Ascending aorta (tissue), 2 donors: ENCODE measurements at regions of chr15 and their contacts with region 1.

Region 1: GRCh38 chr15:74134387-74135027 is 4.1 kb downstream of the ISLR2 start:
- DNase-seq: no peak
- H3K4me3 ChIP-seq: no peak overlapping the region
- H3K27ac ChIP-seq: no peak overlapping the region
- H3K4me1 ChIP-seq: peaks cover 3 to 25% of the 10 kb centered on the region in 2 donors
- H3K27me3 ChIP-seq: peaks cover 35% of the 10 kb centered on the region
- CTCF ChIP-seq: peak in 2 of 3 experiments; percentile 33 to 40

Region 2: GRCh38 chr15:73704869-73705645 is 429.4 kb before region 1 on chr15:
- intact Hi-C with region 1: no loop called
- DNase-seq: peak in 1 of 2 donors; percentile 72
- H3K4me3 ChIP-seq: no peak overlapping the region
- H3K27ac ChIP-seq: no peak overlapping the region
- H3K4me1 ChIP-seq: no peaks in the 10 kb centered on the region
- H3K27me3 ChIP-seq: no peaks in the 10 kb centered on the region
- CTCF ChIP-seq: peak; percentile 47 to 78 (median 67)

Region 3: DNA sequence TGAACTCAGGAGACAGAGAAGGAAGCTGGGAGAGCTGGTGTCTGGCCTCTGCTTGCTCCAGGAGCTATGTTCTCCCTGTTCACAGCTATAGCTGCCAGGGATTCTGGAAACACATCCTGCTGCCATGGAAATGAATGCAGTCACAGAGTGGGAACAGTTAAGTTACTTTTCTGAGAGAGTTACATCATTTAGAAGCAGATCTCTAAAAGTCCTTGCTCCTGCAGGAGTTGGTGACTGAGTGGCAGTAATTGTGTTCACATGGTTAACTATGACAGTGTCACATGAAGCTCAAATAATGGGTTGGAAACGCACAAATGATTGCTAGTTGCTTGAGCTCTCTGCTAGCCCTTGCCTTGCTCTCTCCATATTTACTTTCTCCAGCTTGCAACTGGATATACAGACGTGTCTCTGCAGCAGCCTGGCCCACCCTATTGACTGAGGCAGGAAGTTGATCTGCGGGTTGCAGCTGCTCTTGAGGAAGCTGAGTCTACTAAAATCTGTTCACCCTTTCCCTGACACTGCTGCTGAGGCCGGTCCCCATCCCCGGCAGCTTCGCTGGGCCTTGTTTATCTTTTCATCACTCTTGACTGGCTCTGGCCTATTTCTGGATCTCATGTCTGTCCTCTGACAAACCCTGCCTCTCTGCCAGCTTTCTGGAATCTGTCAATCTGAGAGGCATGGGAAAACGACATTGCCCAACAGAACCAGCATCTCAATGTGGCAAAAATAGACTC is 22.3 kb after region 1 on chr15:
- intact Hi-C with region 1: loop called (anchors 2 kb)
- DNase-seq: peak in 1 of 2 donors; percentile 80
- H3K4me3 ChIP-seq: no peak overlapping the region
- H3K27ac ChIP-seq: peak overlapping the region; percentile 59 to 72
- H3K4me1 ChIP-seq: peaks cover 3 to 25% of the 10 kb centered on the region in 2 donors
- H3K27me3 ChIP-seq: no peaks in the 10 kb centered on the region
- CTCF ChIP-seq: no peak

Region 4: GRCh38 chr15:74208901-74209559 is 74.5 kb after region 1 on chr15:
- intact Hi-C with region 1: loop called (anchors 5 kb)
- DNase-seq: no peak
- H3K4me3 ChIP-seq: no peak overlapping the region
- H3K27ac ChIP-seq: no peak overlapping the region
- H3K4me1 ChIP-seq: peaks cover 21 to 31% of the 10 kb centered on the region in 2 donors
- H3K27me3 ChIP-seq: no peaks in the 10 kb centered on the region
- CTCF ChIP-seq: no peak

Region 5: GRCh38 chr15:74265046-74265639 is 130.6 kb after region 1 on chr15:
- intact Hi-C with region 1: no loop called
- DNase-seq: no peak
- H3K4me3 ChIP-seq: no peak overlapping the region
- H3K27ac ChIP-seq: no peak overlapping the region
- H3K4me1 ChIP-seq: no peaks in the 10 kb centered on the region
- H3K27me3 ChIP-seq: no peaks in the 10 kb centered on the region
- CTCF ChIP-seq: no peak